Endothelial cell of umbilical vein (primary cell): ENCODE measurements at regions of chr11 and their contacts with region 1.

Region 1: DNA sequence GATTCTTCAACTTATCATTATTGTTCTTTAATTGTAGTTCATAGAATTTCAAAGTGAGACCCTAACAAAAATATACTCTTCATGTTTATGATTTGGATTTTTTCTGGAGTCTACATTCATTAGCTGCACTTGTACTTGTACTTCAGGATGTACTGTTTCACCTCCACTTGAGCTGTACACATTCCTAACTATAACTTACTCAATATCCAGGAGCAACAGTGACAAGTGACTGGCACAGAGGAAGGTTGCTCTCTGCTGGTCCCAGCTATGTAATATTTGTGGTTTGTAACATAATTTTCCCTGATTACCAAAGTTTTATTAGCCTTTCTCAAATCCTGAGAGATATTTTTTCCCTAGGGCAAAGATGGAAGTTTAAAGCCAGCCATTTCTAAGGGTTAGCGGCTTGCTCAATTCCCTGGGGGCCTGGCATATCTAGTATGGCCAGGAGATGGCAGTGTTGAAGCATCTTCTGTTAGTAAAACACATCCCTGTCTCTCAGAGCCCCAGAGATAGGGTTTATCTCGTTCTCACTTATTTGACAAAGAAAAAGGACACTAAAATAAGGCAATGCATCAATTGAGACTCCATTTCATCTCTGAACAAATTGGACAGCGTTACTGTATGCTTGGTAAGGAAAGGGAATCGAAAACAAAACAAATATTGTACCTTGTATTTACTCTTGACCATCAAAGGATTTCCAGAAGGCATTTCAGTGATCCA is 14.2 kb downstream of the OR52A5 start:
- DNase-seq: peak; percentile 75
- H3K4me3 ChIP-seq: no peak overlapping the region
- H3K27ac ChIP-seq: no peak overlapping the region
- H3K4me1 ChIP-seq: no peaks in the 10 kb centered on the region
- H3K27me3 ChIP-seq: no peaks in the 10 kb centered on the region
- CTCF ChIP-seq: peak; percentile 68 to 80
- POLR2A ChIP-seq: no peak

Region 2: GRCh38 chr11:5204787-5205186 is 80.8 kb after region 1 on chr11:
- CTCF ChIA-PET with region 1: interaction called, 5 read pairs
- POLR2A ChIA-PET with region 1: no interaction called
- dilution Hi-C with region 1: no loop called
- intact Hi-C with region 1: loop called (anchors 1 kb)
- DNase-seq: peak; percentile 72
- H3K4me3 ChIP-seq: no peak overlapping the region
- H3K27ac ChIP-seq: no peak overlapping the region
- H3K4me1 ChIP-seq: no peaks in the 10 kb centered on the region
- H3K27me3 ChIP-seq: no peaks in the 10 kb centered on the region
- CTCF ChIP-seq: peak; percentile 32 to 42
- POLR2A ChIP-seq: no peak

Region 3: GRCh38 chr11:5274395-5274794 is 150.4 kb after region 1 on chr11:
- CTCF ChIA-PET with region 1: no interaction called
- POLR2A ChIA-PET with region 1: no interaction called
- dilution Hi-C with region 1: no loop called
- intact Hi-C with region 1: no loop called
- DNase-seq: no peak
- H3K4me3 ChIP-seq: no peak overlapping the region
- H3K27ac ChIP-seq: no peak overlapping the region
- H3K4me1 ChIP-seq: no peaks in the 10 kb centered on the region
- H3K27me3 ChIP-seq: no peaks in the 10 kb centered on the region
- CTCF ChIP-seq: no peak
- POLR2A ChIP-seq: no peak

Region 4: GRCh38 chr11:5369793-5370192 is 245.8 kb after region 1 on chr11:
- CTCF ChIA-PET with region 1: interaction called, 24 read pairs
- POLR2A ChIA-PET with region 1: no interaction called
- dilution Hi-C with region 1: no loop called
- intact Hi-C with region 1: no loop called
- DNase-seq: peak; percentile 66
- H3K4me3 ChIP-seq: no peak overlapping the region
- H3K27ac ChIP-seq: no peak overlapping the region
- H3K4me1 ChIP-seq: peaks cover 19% of the 10 kb centered on the region
- H3K27me3 ChIP-seq: no peaks in the 10 kb centered on the region
- CTCF ChIP-seq: peak; percentile 32 to 34
- POLR2A ChIP-seq: no peak

Region 5: GRCh38 chr11:5420993-5421392 is 297.0 kb after region 1 on chr11:
- CTCF ChIA-PET with region 1: no interaction called
- POLR2A ChIA-PET with region 1: no interaction called
- dilution Hi-C with region 1: no loop called
- intact Hi-C with region 1: no loop called
- DNase-seq: no peak
- H3K4me3 ChIP-seq: no peak overlapping the region
- H3K27ac ChIP-seq: no peak overlapping the region
- H3K4me1 ChIP-seq: no peaks in the 10 kb centered on the region
- H3K27me3 ChIP-seq: no peaks in the 10 kb centered on the region
- CTCF ChIP-seq: no peak
- POLR2A ChIP-seq: no peak

Region 6: DNA sequence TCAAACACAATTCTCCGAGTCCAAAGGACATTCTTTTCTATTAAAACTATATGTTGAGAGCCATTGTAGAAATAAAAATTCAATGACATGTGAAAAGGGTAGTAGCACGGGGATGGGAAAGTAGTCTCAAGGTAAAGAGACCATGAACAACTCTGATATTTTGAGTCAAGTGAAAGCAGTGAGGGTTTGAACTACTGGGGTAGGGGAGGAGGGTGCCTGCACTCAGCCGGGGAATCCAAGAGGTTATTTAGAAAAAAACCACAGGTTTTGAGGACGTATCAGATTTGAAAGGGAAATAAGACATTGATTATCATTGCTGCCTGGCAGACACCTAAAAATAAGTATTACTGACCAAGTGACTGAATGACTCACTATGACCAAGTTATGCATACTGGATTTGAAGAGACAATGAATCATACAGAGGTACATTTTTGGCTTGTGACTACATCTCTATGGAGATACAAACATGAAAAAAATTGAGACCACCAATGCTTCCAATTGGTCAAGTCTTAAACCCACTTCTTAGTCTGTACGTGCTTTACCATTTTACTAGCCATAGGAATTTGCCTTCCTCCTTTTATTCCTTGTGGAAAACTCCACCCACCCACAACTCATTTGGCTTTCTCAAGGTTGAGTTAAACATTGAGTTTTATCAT is 426.6 kb after region 1 on chr11:
- CTCF ChIA-PET with region 1: interaction called, 3 read pairs
- POLR2A ChIA-PET with region 1: no interaction called
- dilution Hi-C with region 1: no loop called
- intact Hi-C with region 1: loop called (anchors 10 kb)
- DNase-seq: no peak
- H3K4me3 ChIP-seq: no peak overlapping the region
- H3K27ac ChIP-seq: no peak overlapping the region
- H3K4me1 ChIP-seq: no peaks in the 10 kb centered on the region
- H3K27me3 ChIP-seq: no peaks in the 10 kb centered on the region
- CTCF ChIP-seq: no peak
- POLR2A ChIP-seq: no peak